GM12878 (cell line): ENCODE measurements at regions of chr9 and their contacts with region 1.

Region 1: GRCh38 chr9:14941501-14942405 is 31.5 kb upstream of the FREM1 start:
- DNase-seq: no peak
- ATAC-seq: no peak
- H3K4me3 ChIP-seq: no peak overlapping the region
- H3K27ac ChIP-seq: no peak overlapping the region
- H3K4me1 ChIP-seq: no peaks in the 10 kb centered on the region
- H3K27me3 ChIP-seq: no peaks in the 10 kb centered on the region
- CTCF ChIP-seq: no peak
- EP300 ChIP-seq: no peak
- POLR2A ChIP-seq: no peak
- RAD21 ChIP-seq: no peak

Region 2: GRCh38 chr9:14891332-14891731 is 50.4 kb before region 1 on chr9:
- CTCF ChIA-PET with region 1: no interaction called
- POLR2A ChIA-PET with region 1: no interaction called
- RAD21 ChIA-PET with region 1: no interaction called
- SMC1A ChIA-PET with region 1: no interaction called
- in situ Hi-C with region 1: no loop called
- intact Hi-C with region 1: loop called (anchors 5 kb)
- DNase-seq: no peak
- ATAC-seq: no peak
- H3K4me3 ChIP-seq: no peak overlapping the region
- H3K27ac ChIP-seq: no peak overlapping the region
- H3K4me1 ChIP-seq: no peaks in the 10 kb centered on the region
- H3K27me3 ChIP-seq: no peaks in the 10 kb centered on the region
- CTCF ChIP-seq: no peak
- EP300 ChIP-seq: no peak
- POLR2A ChIP-seq: no peak
- RAD21 ChIP-seq: no peak

Region 3: GRCh38 chr9:14924899-14925235 is 16.9 kb before region 1 on chr9:
- CTCF ChIA-PET with region 1: no interaction called
- POLR2A ChIA-PET with region 1: no interaction called
- RAD21 ChIA-PET with region 1: no interaction called
- SMC1A ChIA-PET with region 1: no interaction called
- in situ Hi-C with region 1: no loop called
- intact Hi-C with region 1: no loop called
- DNase-seq: no peak
- ATAC-seq: no peak
- H3K4me3 ChIP-seq: no peak overlapping the region
- H3K27ac ChIP-seq: no peak overlapping the region
- H3K4me1 ChIP-seq: no peaks in the 10 kb centered on the region
- H3K27me3 ChIP-seq: no peaks in the 10 kb centered on the region; a peak in 1 of 4 replicates
- CTCF ChIP-seq: no peak
- EP300 ChIP-seq: no peak
- POLR2A ChIP-seq: no peak
- RAD21 ChIP-seq: no peak

Region 4: DNA sequence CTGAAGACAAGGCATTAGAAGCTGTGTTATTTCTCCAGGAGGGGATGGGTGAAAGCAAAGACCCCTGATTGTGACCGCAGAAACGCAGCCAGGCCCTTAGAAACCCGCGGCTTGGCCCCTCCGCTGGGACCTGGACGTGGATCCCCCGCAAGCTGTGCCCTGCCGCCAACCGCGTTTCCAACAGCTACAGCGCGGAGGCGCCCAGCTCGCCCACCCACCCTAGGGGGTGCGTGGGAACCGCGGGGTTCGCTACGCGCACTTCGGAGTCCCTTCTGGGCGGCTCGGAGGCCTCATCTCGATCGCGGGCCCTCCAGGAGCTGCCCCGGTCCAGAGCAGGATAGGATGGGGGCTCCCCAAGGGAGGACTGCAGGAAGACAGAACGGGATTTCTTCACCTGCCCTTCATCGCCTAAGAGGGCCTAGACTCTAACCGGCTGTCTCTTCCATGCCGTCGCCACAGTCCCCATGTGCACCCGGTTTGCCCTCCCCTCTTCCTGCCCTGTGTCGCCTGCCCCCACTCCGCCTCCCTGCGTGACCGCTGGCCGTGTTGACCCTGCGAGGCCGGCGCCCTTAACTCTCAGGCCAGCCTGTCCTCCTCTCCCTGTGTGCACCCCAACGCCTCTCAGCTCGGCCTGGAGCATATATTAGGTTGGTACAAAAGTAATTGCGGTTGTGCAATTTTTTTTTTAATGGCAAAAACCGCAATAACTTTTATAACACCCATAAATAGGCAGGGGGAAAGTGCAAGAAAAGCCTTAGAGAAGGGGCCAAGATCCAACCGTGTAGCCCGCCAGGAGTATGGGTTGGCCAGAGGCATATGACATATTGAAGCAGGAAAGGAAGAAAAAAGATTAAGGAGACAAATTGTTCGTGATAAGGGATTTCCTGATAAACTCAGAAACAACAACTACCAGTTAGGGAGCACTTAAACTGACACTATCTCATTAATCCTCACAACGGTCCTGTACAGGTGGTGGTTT is 36.6 kb after region 1 on chr9:
- CTCF ChIA-PET with region 1: no interaction called
- POLR2A ChIA-PET with region 1: no interaction called
- RAD21 ChIA-PET with region 1: no interaction called
- SMC1A ChIA-PET with region 1: no interaction called
- in situ Hi-C with region 1: no loop called
- intact Hi-C with region 1: loop called (anchors 5 kb)
- DNase-seq: no peak
- ATAC-seq: no peak
- H3K4me3 ChIP-seq: no peak overlapping the region
- H3K27ac ChIP-seq: no peak overlapping the region
- H3K4me1 ChIP-seq: no peaks in the 10 kb centered on the region
- H3K27me3 ChIP-seq: no peaks in the 10 kb centered on the region
- CTCF ChIP-seq: no peak
- EP300 ChIP-seq: no peak
- POLR2A ChIP-seq: no peak
- RAD21 ChIP-seq: no peak